Esophagus muscularis mucosa (tissue), 4 donors: ENCODE measurements at regions of chr2 and their contacts with region 1.

Region 1: DNA sequence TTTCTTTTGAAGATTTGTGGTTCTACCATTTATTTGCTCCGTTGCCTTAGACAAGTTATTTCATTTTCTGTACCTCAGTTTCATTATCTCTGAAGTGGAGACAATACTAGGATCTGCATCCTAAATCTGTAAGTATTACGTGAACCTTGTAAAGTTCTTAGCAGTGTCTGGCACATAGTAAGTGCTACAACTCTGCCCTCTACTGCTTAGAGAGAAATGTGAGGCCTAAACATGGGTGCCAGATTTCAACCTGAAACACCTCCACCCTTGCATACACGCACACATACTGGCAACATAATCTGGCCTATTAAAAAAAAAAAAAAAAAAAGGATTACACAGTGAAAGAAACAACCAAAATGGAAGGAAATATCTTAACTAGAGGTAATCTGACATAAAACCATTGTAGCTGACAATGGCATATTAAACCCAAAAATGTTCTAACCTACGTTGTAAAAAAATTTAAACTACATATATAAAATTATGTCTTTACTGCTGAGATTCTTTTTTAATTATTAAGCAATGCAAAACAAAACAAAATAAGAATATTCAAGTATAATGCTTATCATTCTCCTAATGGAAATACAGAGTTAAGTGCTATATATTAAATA is 132.6 kb downstream of the MAP2 start:
- DNase-seq: no peak
- H3K4me3 ChIP-seq: no peak overlapping the region
- H3K27ac ChIP-seq: no peak overlapping the region
- H3K4me1 ChIP-seq: no peaks in the 10 kb centered on the region
- H3K27me3 ChIP-seq: no peaks in the 10 kb centered on the region
- CTCF ChIP-seq: peak in 2 of 3 experiments; percentile 27 to 28
- EP300 ChIP-seq: no peak
- POLR2A ChIP-seq: no peak

Region 2: GRCh38 chr2:209423562-209424198 is 132.8 kb before region 1 on chr2 and contains the start of gene MAP2:
- intact Hi-C with region 1: loop called (anchors 10 kb)
- DNase-seq: no peak
- H3K4me3 ChIP-seq: peak within 1 kb of the TSS; percentile 64 to 74 (median 66)
- H3K27ac ChIP-seq: peak within 1 kb of the TSS in 3 of 4 donors; percentile 46 to 59 (median 52)
- H3K4me1 ChIP-seq: peaks cover 0 to 29% (median 23%) of the 10 kb centered on the region in 4 donors
- H3K27me3 ChIP-seq: no peaks in the 10 kb centered on the region
- CTCF ChIP-seq: peak; percentile 80 to 95 (median 83)
- EP300 ChIP-seq: no peak
- POLR2A ChIP-seq: no peak
- total RNA-seq, gene MAP2: 11.1 to 62.6 (median 47.0) TPM

Region 3: GRCh38 chr2:209451209-209451834 is 105.1 kb before region 1 on chr2:
- intact Hi-C with region 1: no loop called
- DNase-seq: no peak
- H3K4me3 ChIP-seq: no peak overlapping the region
- H3K27ac ChIP-seq: no peak overlapping the region
- H3K4me1 ChIP-seq: no peaks in the 10 kb centered on the region
- H3K27me3 ChIP-seq: no peaks in the 10 kb centered on the region
- CTCF ChIP-seq: no peak
- EP300 ChIP-seq: no peak
- POLR2A ChIP-seq: no peak